Upper lobe of right lung (tissue), 1 donor: ENCODE measurements at regions of chr14 and their contacts with region 1.

Region 1: GRCh38 chr14:23327947-23328744 is 6.9 kb downstream of the PABPN1 start:
- DNase-seq: no peak
- ATAC-seq: peak; percentile 91
- H3K4me3 ChIP-seq: no peak overlapping the region
- H3K27ac ChIP-seq: no peak overlapping the region
- H3K4me1 ChIP-seq: peaks cover 6% of the 10 kb centered on the region
- H3K27me3 ChIP-seq: no peaks in the 10 kb centered on the region
- CTCF ChIP-seq: peak; percentile 89

Region 2: GRCh38 chr14:23379366-23380196 is 51.4 kb after region 1 on chr14:
- intact Hi-C with region 1: loop called (anchors 5 kb)
- DNase-seq: peak; percentile 88
- ATAC-seq: peak; percentile 94
- H3K4me3 ChIP-seq: no peak overlapping the region
- H3K27ac ChIP-seq: no peak overlapping the region
- H3K4me1 ChIP-seq: no peaks in the 10 kb centered on the region
- H3K27me3 ChIP-seq: no peaks in the 10 kb centered on the region
- CTCF ChIP-seq: peak; percentile 91

Region 3: GRCh38 chr14:23454445-23454856 is 126.3 kb after region 1 on chr14:
- intact Hi-C with region 1: no loop called
- DNase-seq: no peak
- ATAC-seq: no peak
- H3K4me3 ChIP-seq: no peak overlapping the region
- H3K27ac ChIP-seq: no peak overlapping the region
- H3K4me1 ChIP-seq: no peaks in the 10 kb centered on the region
- H3K27me3 ChIP-seq: peaks cover 30% of the 10 kb centered on the region
- CTCF ChIP-seq: no peak